CD4-positive, alpha-beta T cell (primary cell): ENCODE measurements at regions of chr16 and their contacts with region 1.

Region 1: DNA sequence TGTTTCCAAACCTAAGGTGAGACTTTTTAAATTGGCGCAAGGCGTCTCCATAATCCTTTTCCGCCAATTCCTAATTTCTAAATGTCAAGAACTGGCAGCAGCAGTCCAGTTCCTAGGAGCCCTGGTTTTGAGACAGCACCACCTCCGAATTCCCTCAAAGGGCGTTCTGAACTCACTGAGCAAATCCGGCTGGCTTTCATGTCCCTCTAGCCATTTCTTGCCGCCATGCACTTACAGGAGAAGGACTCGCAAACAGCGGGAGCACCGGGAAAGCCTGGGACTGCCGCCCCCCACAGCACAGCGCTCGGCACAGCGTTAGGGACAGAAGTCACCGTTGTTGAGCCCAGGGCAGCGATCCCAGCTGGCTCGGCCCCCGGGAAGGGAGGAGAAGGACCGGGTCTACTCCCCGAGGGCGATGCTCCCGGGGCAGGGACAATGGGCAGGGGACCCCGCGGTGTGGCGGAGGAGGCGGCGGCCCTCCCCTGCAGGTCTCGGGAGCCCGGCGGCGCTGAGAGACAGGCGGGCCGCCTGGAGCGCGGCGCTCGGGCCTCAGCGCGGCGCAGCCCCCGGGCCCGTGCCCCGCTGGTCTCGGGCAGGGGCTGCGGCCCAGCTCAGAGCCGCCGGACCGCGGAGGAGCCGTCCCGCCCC is 545 bp downstream of the ARHGAP17 start:
- DNase-seq: peak in 10 of 14 experiments; percentile 1 to 49 (median 13)
- ATAC-seq: peak; percentile 34
- H3K4me3 ChIP-seq: peak overlapping the region; percentile 89
- H3K4me3 Mint-ChIP-seq: peak overlapping the region; percentile 96
- H3K27ac ChIP-seq: peak overlapping the region; percentile 76 to 78
- H3K27ac Mint-ChIP-seq: peak overlapping the region; percentile 91
- H3K4me1 ChIP-seq: peaks cover 58% of the 10 kb centered on the region
- H3K4me1 Mint-ChIP-seq: peaks cover 79% of the 10 kb centered on the region
- H3K27me3 ChIP-seq: no peaks in the 10 kb centered on the region
- H3K27me3 Mint-ChIP-seq: no peaks in the 10 kb centered on the region
- CTCF ChIP-seq: no peak

Region 2: DNA sequence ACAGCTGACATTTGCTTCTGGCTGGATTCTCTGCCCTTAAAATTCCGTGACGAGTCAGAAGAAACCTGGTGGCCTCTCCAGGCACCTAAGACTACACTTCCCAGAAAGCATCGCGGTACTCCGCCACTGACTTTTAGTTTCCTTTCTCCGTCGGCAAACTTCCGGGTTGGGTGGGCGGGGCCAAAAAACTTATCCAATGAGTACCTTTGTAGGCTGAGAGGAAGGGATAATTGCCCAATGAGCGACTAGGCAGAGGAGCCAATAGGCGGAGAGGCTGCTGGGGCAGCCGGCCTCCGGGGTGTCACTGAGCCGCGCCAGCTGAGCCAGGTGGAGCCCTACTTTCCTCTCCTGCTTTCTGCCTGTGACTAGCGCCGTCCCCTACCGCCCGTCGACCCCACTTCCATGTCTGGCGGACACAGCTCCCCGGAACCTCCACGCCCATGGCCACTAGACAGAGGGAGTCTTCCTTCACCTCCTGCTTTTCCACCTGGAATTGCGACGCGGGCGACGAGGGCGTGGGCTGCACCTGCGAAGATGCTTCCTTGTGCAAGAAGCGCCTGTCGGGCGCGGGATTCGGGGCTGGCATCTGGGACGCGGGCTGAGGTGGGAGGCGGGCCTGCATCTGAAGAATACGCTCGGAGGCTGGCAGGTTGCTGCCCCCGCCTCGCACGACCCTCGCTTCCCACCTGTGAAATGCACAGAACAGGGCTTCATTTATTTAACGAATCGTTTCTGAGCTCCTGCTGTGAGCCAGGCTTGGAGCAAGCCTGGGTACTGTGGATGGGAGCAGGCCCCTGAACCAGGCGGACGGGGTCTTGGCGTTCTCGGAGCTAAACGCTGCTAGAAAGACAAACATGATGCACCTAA is 17.1 kb after region 1 on chr16:
- CTCF ChIA-PET with region 1: interaction called, 5 read pairs
- POLR2A ChIA-PET with region 1: interaction called, 48 read pairs
- intact Hi-C with region 1: loop called (anchors 1 kb)
- DNase-seq: peak; percentile 81 to 97 (median 86)
- ATAC-seq: peak; percentile 99
- H3K4me3 ChIP-seq: peak overlapping the region; percentile 88
- H3K4me3 Mint-ChIP-seq: peak overlapping the region; percentile 90
- H3K27ac ChIP-seq: peak overlapping the region in 1 of 2 donors; percentile 52
- H3K27ac Mint-ChIP-seq: peak overlapping the region; percentile 90
- H3K4me1 ChIP-seq: peaks cover 20% of the 10 kb centered on the region
- H3K4me1 Mint-ChIP-seq: peaks cover 30% of the 10 kb centered on the region
- H3K27me3 ChIP-seq: no peaks in the 10 kb centered on the region
- H3K27me3 Mint-ChIP-seq: no peaks in the 10 kb centered on the region
- CTCF ChIP-seq: no peak

Region 3: GRCh38 chr16:25257504-25257955 is 242.9 kb after region 1 on chr16 and contains the start of gene ZKSCAN2:
- CTCF ChIA-PET with region 1: no interaction called
- POLR2A ChIA-PET with region 1: no interaction called
- intact Hi-C with region 1: loop called in 1 of 2 experiments (anchors 2 kb)
- DNase-seq: peak; percentile 56 to 91 (median 78)
- ATAC-seq: peak; percentile 68
- H3K4me3 ChIP-seq: peak within 1 kb of the TSS; percentile 87
- H3K4me3 Mint-ChIP-seq: peak within 1 kb of the TSS; percentile 96
- H3K27ac ChIP-seq: peak within 1 kb of the TSS; percentile 80 to 92
- H3K27ac Mint-ChIP-seq: peak within 1 kb of the TSS; percentile 94
- H3K4me1 ChIP-seq: peaks cover 39% of the 10 kb centered on the region
- H3K4me1 Mint-ChIP-seq: peaks cover 68% of the 10 kb centered on the region
- H3K27me3 ChIP-seq: no peaks in the 10 kb centered on the region
- H3K27me3 Mint-ChIP-seq: no peaks in the 10 kb centered on the region
- CTCF ChIP-seq: no peak
- total RNA-seq, gene ZKSCAN2: 9.5 to 10.2 TPM